HEK293 (cell line): ENCODE measurements at regions of chr3 and their contacts with region 1.

Region 1: GRCh38 chr3:13419505-13420044 is 547 bp downstream of the NUP210 start:
- H3K4me3 ChIP-seq: peak overlapping the region; percentile 72
- H3K27ac ChIP-seq: peak overlapping the region; percentile 90; the same call in 1 of the 2 replicates
- H3K4me1 ChIP-seq: peaks cover 8% of the 10 kb centered on the region
- CTCF ChIP-seq: peak; percentile 71

Region 2: DNA sequence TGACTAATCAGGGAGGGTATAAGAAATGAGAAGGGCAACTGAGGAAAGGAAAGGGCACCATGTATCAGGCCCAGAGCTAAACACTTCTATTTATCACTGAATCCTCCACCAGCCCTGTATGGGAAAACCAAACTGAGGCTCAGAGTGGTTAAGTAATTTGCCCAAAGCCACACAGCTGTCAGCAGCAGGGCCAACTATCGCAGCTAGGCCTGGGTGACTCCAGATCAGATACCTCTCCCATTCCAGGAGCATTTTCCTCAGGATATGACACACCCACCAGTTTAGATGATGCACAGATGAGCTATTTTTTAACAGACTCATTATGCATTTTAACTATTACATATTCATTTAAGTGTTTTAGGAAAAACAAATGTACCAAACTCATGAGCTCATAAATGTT is 14.0 kb before region 1 on chr3:
- CTCF ChIA-PET with region 1: interaction called, 13 read pairs
- POLR2A ChIA-PET with region 1: interaction called, 5 read pairs
- H3K4me3 ChIP-seq: no peak overlapping the region
- H3K27ac ChIP-seq: no peak overlapping the region
- H3K4me1 ChIP-seq: no peaks in the 10 kb centered on the region
- CTCF ChIP-seq: no peak

Region 3: GRCh38 chr3:13452490-13453335 is 33.1 kb after region 1 on chr3:
- CTCF ChIA-PET with region 1: interaction called, 16 read pairs
- POLR2A ChIA-PET with region 1: interaction called, 6 read pairs
- H3K4me3 ChIP-seq: no peak overlapping the region
- H3K27ac ChIP-seq: no peak overlapping the region; the same call in 1 of the 2 replicates
- H3K4me1 ChIP-seq: no peaks in the 10 kb centered on the region
- CTCF ChIP-seq: peak; percentile 58; the same call in 1 of the 2 replicates

Region 4: GRCh38 chr3:13711906-13712650 is 292.5 kb after region 1 on chr3:
- CTCF ChIA-PET with region 1: no interaction called
- POLR2A ChIA-PET with region 1: no interaction called
- H3K4me3 ChIP-seq: no peak overlapping the region
- H3K27ac ChIP-seq: no peak overlapping the region
- H3K4me1 ChIP-seq: no peaks in the 10 kb centered on the region
- CTCF ChIP-seq: no peak